PC-9 (cell line): ENCODE measurements at regions of chr7 and their contacts with region 1.

Region 1: GRCh38 chr7:91089382-91089963 is 174.8 kb upstream of the FZD1 start:
- DNase-seq: peak in 1 of 2 experiments; percentile 19
- H3K4me3 ChIP-seq: no peak overlapping the region
- H3K27ac ChIP-seq: no peak overlapping the region
- H3K4me1 ChIP-seq: no peaks in the 10 kb centered on the region
- H3K27me3 ChIP-seq: no peaks in the 10 kb centered on the region
- CTCF ChIP-seq: peak; percentile 84

Region 2: GRCh38 chr7:91128683-91129348 is 39.3 kb after region 1 on chr7:
- CTCF ChIA-PET with region 1: no interaction called
- POLR2A ChIA-PET with region 1: no interaction called
- intact Hi-C with region 1: no loop called
- DNase-seq: no peak
- H3K4me3 ChIP-seq: no peak overlapping the region
- H3K27ac ChIP-seq: no peak overlapping the region
- H3K4me1 ChIP-seq: no peaks in the 10 kb centered on the region
- H3K27me3 ChIP-seq: no peaks in the 10 kb centered on the region
- CTCF ChIP-seq: no peak

Region 3: GRCh38 chr7:91424371-91424770 is 334.9 kb after region 1 on chr7:
- CTCF ChIA-PET with region 1: no interaction called
- POLR2A ChIA-PET with region 1: no interaction called
- intact Hi-C with region 1: no loop called
- DNase-seq: no peak
- H3K4me3 ChIP-seq: no peak overlapping the region
- H3K27ac ChIP-seq: no peak overlapping the region
- H3K4me1 ChIP-seq: no peaks in the 10 kb centered on the region
- H3K27me3 ChIP-seq: no peaks in the 10 kb centered on the region
- CTCF ChIP-seq: no peak

Region 4: DNA sequence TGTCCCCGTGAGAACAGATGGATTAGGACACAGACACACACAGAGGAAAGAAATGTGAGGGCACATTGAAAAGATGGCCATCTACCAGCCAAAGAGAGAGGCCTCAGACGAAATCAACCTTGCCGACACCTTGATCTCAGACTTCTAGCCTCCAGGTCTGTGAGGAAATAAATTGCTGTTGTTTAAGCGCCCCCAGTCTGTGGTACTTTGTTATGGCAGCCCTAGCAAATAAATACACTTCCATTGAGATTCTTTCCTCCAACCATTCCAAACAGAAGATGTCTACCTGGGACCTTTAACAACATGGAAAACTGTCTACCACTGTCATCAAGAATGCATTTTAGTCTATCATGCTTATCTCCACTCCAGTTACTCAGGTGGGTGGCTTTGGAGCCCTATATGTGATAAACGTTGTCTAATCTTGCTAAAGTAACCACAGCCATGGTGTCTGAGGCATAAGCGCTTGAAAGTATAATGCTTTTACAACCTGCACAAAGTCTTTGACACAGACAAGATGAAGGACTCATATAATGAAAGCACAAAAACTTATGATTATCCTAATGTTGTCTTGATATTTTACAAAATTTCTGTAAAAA is 546.8 kb after region 1 on chr7:
- CTCF ChIA-PET with region 1: no interaction called
- POLR2A ChIA-PET with region 1: no interaction called
- intact Hi-C with region 1: loop called (anchors 1 kb)
- DNase-seq: peak in 1 of 2 experiments; percentile 35
- H3K4me3 ChIP-seq: no peak overlapping the region
- H3K27ac ChIP-seq: no peak overlapping the region
- H3K4me1 ChIP-seq: no peaks in the 10 kb centered on the region
- H3K27me3 ChIP-seq: no peaks in the 10 kb centered on the region
- CTCF ChIP-seq: peak; percentile 57

Region 5: GRCh38 chr7:91852263-91852741 is 762.8 kb after region 1 on chr7:
- CTCF ChIA-PET with region 1: no interaction called
- POLR2A ChIA-PET with region 1: interaction called, 13 read pairs
- intact Hi-C with region 1: no loop called
- DNase-seq: peak in 1 of 2 experiments; percentile 41
- H3K4me3 ChIP-seq: no peak overlapping the region
- H3K27ac ChIP-seq: no peak overlapping the region
- H3K4me1 ChIP-seq: peaks cover 13% of the 10 kb centered on the region; the same call in 1 of the 2 replicates
- H3K27me3 ChIP-seq: no peaks in the 10 kb centered on the region
- CTCF ChIP-seq: peak; percentile 51